ENCODE measurements at regions of chr12 and their contacts with region 1.

Region 1: DNA sequence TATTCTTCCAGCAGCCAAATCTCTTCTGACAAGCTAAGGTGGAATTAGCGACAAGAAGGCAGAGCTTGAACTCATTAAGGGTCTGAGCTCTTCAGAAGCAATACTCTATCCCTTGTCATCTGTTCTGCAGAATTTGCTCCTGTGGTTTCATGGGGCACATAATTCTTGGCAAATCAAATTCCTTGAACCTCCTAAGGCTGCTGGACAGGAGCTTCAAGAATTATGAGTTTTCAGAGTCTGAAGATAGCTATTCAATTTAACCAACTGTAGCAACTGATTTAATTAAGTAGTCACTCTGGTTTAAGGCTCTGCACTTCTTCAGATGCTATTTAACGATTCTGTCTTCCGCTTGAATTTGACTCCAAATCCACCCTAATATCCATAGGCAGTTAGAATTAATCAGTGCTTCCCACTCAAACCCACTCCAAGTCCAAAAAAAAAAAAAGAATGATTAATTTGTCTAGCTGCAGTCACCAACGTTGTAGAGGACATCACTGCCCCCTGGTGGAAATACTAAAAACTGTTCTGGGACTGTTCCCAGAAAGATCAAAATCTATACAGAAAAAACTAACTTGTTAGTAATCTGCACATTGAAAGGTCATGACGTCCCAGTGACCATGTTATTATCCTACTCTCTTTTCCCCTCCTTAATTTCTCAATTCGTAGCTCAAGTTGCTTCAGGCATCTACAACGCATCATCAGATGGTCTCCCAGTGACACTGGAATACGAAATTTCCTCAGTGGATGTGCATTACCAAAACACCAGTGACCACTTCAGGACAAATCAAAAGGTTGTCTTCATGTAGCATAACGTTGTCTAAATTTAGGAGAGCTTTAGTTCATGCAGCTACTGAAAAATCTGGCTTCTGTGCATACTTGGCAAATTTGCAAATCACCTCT is 169.8 kb downstream of the KIF21A start:
- DNase-seq: peak; percentile 38
- ATAC-seq: no peak
- H3K4me3 Mint-ChIP-seq: no peak overlapping the region
- H3K27ac Mint-ChIP-seq: no peak overlapping the region
- H3K4me1 Mint-ChIP-seq: peaks cover 5% of the 10 kb centered on the region
- H3K27me3 Mint-ChIP-seq: peaks cover 15% of the 10 kb centered on the region

Region 2: DNA sequence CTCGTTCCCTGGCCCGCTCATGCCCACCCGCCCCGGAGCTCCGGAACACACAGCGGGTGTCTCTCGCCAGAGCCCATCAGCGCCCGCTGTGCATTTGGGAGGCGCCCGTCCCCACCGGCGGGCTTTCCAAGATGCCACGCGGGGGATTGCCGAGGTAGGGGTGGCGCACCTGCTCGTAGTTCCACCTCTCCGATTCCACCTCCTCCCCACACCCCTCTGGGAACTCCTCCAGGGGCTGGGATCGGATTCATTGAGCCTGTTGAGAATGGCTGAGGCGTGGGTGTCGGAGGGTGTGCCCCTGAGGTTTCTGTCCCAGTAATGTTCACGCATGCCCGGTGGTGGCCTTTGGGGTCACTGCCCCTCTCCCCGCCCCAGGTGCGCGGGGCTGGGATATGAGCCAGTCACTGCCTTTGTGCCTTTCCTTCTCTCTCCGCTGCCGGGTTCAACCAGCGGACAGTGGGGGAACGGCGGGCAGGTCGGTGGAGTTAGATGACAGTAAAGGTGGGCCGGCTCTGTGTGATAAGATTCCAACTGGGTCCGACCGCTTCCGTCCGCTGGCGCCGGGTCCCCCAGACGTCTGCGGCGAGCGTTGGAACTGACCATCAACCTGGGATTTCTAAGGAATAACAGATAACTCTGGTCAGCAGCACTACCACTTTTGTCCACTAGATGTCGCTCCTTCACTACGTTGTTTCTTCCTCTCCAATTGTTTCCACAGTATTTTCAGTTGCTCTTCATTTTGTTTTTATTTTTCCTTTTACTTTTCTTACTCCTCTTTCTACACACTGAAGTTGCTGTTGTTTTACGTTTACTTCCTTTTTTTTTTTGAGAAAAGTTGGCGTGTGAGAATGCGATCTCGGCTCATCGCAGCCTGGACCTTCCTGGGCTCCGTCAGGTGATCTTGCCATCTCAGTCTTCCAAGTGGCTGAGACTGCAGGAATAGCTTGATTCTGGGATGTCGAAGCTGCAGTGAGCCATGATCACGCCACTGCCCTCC is 1134.6 kb before region 1 on chr12:
- CTCF ChIA-PET with region 1: no interaction called
- POLR2A ChIA-PET with region 1: no interaction called
- intact Hi-C with region 1: loop called in 1 of 2 experiments (anchors 5 kb)
- DNase-seq: peak; percentile 76
- ATAC-seq: peak; percentile 66
- H3K4me3 Mint-ChIP-seq: peak overlapping the region; percentile 61
- H3K27ac Mint-ChIP-seq: peak overlapping the region; percentile 27
- H3K4me1 Mint-ChIP-seq: peaks cover 6% of the 10 kb centered on the region
- H3K27me3 Mint-ChIP-seq: peaks cover 10% of the 10 kb centered on the region

Region 3: DNA sequence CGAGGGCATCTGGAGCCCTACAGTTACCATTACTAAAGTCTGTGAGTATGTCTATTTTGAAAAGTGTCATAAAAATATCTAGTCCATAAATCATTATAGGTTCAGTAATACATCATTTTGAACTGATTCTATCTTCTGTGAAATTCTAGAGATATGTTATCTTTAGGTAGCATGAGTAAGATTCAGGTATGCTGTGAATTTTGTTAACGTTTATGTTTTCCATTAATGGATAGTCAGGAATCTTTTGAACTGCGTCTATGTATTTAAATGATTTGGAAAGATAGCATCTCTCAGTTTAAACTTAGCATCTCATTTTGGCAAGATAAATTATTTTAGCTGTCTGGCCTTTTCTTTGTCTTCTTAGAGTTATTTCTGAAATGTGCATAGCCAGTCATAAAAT is 948.2 kb before region 1 on chr12:
- CTCF ChIA-PET with region 1: interaction called, 18 read pairs
- POLR2A ChIA-PET with region 1: no interaction called
- intact Hi-C with region 1: loop called (anchors 1 to 5 kb)
- DNase-seq: no peak
- ATAC-seq: no peak
- H3K4me3 Mint-ChIP-seq: no peak overlapping the region
- H3K27ac Mint-ChIP-seq: no peak overlapping the region
- H3K4me1 Mint-ChIP-seq: no peaks in the 10 kb centered on the region
- H3K27me3 Mint-ChIP-seq: no peaks in the 10 kb centered on the region

Region 4: GRCh38 chr12:38332814-38333213 is 940.3 kb before region 1 on chr12:
- CTCF ChIA-PET with region 1: interaction called, 18 read pairs
- POLR2A ChIA-PET with region 1: no interaction called
- intact Hi-C with region 1: loop called (anchors 1 to 5 kb)
- DNase-seq: no peak
- ATAC-seq: no peak
- H3K4me3 Mint-ChIP-seq: no peak overlapping the region
- H3K27ac Mint-ChIP-seq: no peak overlapping the region
- H3K4me1 Mint-ChIP-seq: no peaks in the 10 kb centered on the region
- H3K27me3 Mint-ChIP-seq: no peaks in the 10 kb centered on the region

Region 5: DNA sequence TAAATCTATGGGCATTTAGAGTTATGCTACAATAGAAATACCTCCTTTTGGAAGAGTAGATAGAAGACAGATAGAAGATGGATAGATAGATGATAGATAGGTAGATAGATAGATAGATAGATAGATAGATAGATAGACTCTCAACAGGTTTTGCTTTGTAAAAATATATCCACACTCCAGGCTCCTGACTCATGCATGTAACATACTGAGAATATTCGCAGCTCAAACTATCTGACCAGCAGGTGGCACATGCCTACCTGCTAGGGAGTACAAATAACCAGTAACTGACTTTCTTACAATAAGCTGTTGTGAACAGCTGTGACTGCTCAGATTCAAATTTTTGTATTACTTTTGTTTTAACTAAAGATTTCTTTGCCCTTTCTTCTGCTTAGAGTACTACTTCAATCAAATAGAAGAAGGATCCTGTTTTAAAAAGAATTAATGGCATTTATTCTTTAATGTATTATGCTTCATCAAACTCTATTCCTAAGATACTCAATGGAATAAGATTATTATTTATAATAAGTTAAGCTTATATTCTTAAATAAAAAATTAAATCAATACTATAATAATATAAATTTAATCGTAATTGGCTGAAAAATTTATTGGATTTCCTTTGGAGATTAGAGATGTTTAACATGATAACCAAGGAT is 352.0 kb before region 1 on chr12:
- CTCF ChIA-PET with region 1: interaction called, 12 read pairs
- POLR2A ChIA-PET with region 1: no interaction called
- intact Hi-C with region 1: loop called in 1 of 2 experiments (anchors 5 kb)
- DNase-seq: peak; percentile 61
- ATAC-seq: peak; percentile 51
- H3K4me3 Mint-ChIP-seq: no peak overlapping the region
- H3K27ac Mint-ChIP-seq: no peak overlapping the region
- H3K4me1 Mint-ChIP-seq: no peaks in the 10 kb centered on the region
- H3K27me3 Mint-ChIP-seq: peaks cover 6% of the 10 kb centered on the region

Region 6: DNA sequence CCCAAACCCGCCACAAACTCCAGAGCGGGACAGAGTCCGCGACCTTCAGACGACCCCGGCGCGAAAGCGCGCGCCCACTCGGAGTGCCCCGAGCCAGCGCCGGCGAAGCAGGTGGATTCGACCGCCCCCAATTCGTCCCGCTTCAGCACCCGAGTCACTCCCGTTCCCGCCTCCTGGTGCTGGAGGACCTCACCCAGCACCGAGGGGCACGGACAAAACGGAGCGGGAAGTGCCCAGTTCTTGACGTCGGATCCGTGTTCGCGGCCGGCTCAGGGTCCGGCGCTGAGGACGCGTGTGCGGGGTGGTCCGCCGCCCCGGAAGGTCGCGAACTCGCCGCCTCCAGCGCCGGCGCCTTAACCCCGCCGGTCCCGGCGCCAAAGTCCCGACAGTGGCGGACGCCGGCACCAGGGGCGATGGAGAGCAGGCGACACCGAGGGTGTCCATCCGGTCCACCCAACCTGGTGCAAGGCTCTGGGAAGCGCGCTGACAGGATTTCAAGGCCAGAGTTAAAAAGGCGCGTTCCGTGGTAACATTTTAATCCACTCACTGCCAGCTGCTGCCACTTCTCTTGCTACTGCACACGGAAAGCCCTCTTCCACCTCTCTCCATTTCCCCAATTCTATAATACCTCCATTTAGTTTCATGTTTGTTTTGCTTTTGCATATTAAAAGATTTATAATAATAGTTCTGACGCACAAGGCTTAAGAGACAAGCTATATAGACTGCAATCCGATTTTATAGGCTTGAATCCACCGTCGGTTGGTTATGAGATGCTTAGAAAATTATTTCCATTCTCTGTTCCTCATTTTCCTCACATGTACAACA is 127.7 kb before region 1 on chr12:
- CTCF ChIA-PET with region 1: interaction called, 3 read pairs
- POLR2A ChIA-PET with region 1: no interaction called
- intact Hi-C with region 1: loop called (anchors 1 to 5 kb)
- DNase-seq: peak; percentile 69
- ATAC-seq: peak; percentile 70
- H3K4me3 Mint-ChIP-seq: no peak overlapping the region
- H3K27ac Mint-ChIP-seq: no peak overlapping the region
- H3K4me1 Mint-ChIP-seq: no peaks in the 10 kb centered on the region
- H3K27me3 Mint-ChIP-seq: peaks cover 15% of the 10 kb centered on the region

Measured in activated CD4-positive, alpha-beta T cell treated with anti-CD3 and anti-CD28 coated beads for 36 hours (primary cell).